PC-3 (cell line): ENCODE measurements at regions of chr12 and their contacts with region 1.

Region 1: DNA sequence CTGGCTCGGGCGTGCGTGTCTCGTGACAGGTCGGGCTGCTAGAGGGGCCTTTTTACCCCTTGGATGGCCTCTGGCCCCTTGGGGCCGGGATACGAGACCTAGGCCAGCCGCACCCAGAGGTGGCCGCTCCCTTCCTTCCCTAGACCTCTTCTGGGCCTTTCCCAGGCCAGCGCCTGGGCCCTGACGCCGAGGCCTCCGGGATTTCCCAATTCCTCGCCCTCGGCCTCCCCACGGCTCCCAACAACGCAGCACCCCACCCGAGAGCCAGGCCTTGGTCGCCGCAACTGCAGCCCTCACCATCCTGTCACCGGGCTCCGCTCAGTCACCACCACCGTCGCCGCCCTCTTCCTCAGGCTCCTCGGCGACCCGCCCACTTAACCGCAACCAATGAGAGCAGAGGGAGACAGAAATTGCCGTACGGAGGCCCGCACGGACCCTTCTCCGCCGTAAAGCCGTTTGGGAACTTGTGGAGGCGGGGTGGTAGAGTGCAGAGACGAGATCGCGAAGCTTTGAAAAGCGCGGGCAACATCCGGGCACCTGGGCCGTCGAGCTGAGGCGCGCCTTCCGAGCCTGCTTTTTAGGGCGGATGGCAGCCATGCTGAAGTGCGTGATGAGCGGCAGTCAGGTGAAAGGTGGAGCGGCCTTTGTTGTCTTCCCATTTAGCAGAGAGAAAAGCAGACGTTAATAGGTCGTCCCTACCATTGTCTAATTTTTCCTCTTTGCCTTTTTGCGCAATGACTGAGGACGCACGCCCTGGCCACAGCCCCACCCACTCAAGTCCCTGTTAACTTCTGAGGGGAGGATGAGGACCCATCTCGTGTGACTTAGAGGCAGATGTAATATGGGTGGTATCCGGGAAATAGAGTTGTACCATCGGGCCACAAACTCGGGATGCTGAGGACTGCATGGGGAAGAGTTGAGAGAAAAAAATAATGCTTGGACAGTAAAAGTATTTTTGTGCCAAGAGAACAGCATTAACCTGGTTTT is at the starts of genes RAD9B and VPS29:
- DNase-seq: peak; percentile 99
- ATAC-seq: peak; percentile 95
- H3K4me3 ChIP-seq: peak within 1 kb of the TSS; percentile 96
- H3K27ac ChIP-seq: peak within 1 kb of the TSS; percentile 62
- H3K4me1 ChIP-seq: peaks cover 22% of the 10 kb centered on the region
- H3K27me3 ChIP-seq: no peaks in the 10 kb centered on the region
- CTCF ChIP-seq: no peak
- total RNA-seq, gene RAD9B: 0.40 and 0.52 TPM in 2 replicates
- total RNA-seq, gene VPS29: 96.5 and 114 TPM in 2 replicates

Region 2: DNA sequence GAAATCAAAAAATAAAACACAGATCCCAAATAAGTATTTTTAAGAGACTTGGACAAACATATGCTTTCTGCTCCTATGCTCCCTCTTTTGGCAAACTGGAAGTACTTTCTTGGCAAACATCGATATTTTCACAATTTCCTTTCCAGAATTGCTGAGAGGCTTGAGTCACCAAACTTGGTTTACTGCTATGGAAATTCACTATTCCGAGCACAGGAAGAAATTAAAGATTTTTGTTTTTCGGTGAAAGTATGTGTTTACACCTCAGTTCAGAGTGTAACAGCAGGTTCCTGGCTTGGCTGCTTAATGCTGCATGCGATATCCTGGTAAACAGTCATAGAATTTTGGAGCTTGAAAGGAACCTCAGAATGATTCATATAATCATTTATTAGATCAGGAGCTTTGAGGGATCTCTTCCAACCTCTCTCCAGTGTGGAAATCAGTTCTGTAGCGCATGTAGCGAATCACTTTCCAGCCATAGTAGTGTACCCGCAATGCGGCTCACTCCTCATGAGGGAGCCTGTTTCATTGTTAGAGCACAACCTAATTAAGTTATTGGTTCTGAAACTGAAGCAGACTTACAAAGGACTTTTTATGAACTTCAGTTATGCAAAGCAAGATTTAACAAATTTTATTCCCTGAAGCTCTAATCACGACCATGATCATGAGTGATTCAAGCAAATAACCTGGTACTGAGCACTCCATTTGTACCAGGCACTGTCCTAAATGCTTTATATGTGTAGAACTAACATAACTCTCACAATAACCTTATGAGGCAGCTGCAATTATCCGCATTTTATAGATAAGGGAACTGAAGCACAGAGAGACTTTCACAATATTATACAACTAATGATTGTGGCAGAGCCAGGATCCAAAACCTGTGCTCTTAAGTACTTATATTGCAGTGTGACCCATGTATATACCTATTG is 277.4 kb before region 1 on chr12:
- CTCF ChIA-PET with region 1: no interaction called
- POLR2A ChIA-PET with region 1: no interaction called
- intact Hi-C with region 1: no loop called
- DNase-seq: peak; percentile 91
- ATAC-seq: peak; percentile 65
- H3K4me3 ChIP-seq: peak overlapping the region; percentile 64
- H3K27ac ChIP-seq: peak overlapping the region; percentile 91
- H3K4me1 ChIP-seq: peaks cover 27% of the 10 kb centered on the region
- H3K27me3 ChIP-seq: no peaks in the 10 kb centered on the region
- CTCF ChIP-seq: peak; percentile 80

Region 3: DNA sequence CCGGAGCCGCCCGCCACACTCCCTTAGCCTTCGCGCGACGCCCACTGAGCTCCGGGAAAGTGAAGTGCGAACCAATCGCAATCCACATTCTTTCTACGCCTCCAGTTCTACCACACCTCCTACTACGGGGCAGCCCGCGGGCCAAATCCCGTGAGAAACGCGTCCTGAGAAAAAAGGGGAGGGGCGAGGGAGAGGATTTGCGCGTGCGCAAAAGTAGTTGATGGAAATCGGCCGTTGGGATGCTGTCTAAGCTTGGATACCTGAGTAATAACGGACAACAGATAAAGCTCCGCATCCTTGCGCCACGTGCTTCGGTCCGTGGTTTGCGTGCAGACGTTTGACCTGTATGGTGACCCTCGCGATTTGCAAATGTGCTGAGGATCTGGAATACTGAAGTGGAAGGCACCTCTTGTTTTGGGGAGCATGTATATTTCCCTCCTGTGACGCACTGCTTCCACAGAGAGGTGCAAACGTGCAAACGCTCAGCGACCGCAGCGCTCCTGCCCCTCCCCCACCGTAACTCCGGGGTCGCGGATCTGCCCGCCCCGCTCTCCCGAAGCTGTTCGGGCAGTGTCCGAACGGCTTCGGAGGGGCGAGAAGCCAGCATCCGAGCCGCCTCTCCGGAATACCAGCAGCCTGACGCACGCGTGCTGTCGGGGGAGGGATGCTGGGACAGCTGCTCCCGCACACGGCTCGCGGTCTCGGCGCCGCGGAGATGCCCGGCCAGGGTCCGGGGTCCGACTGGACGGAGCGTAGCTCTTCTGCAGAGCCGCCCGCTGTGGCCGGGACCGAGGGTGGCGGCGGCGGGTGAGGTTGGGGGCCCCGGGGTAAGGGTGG is 33.6 kb before region 1 on chr12 and contains the starts of genes FAM216A and GPN3:
- CTCF ChIA-PET with region 1: interaction called, 3 read pairs
- POLR2A ChIA-PET with region 1: interaction called, 11 read pairs
- intact Hi-C with region 1: loop called (anchors 1 kb)
- DNase-seq: peak; percentile 99
- ATAC-seq: peak; percentile 84
- H3K4me3 ChIP-seq: peak within 1 kb of the TSS; percentile 84
- H3K27ac ChIP-seq: peak within 1 kb of the TSS; percentile 75
- H3K4me1 ChIP-seq: peaks cover 14% of the 10 kb centered on the region
- H3K27me3 ChIP-seq: no peaks in the 10 kb centered on the region
- CTCF ChIP-seq: no peak
- total RNA-seq, gene FAM216A: 19.5 and 27.8 TPM in 2 replicates
- total RNA-seq, gene GPN3: 31.4 and 32.5 TPM in 2 replicates

Region 4: DNA sequence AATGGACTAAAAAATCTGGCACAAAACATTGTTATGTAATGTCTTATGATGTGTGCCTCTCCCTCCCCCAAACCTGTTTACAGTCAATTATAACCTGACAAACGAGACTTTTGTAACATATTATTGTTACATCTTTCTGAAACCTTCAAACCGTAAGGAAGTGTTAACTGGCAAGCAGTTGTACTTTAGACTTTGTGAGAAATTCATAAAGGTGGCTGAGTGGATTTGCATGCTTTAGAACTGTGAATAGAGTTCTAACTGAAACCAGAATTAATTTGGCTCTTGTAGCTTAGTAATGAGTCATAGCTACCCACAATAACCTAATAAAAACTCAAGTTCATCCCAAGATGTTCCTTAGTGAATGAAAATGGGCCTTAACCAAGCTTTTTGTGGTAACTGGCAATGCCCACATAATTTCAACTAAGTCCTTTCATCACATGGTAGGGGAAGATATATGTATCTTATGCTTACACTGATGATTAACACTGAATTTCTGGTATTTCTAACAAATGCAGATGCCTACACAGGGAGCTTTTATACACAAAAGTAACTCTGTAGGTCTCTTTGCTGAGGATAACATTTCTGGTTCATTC is 29.8 kb after region 1 on chr12:
- CTCF ChIA-PET with region 1: no interaction called
- POLR2A ChIA-PET with region 1: no interaction called
- intact Hi-C with region 1: no loop called
- DNase-seq: peak; percentile 76
- ATAC-seq: peak; percentile 86
- H3K4me3 ChIP-seq: no peak overlapping the region
- H3K27ac ChIP-seq: peak overlapping the region; percentile 40
- H3K4me1 ChIP-seq: peaks cover 31% of the 10 kb centered on the region
- H3K27me3 ChIP-seq: no peaks in the 10 kb centered on the region
- CTCF ChIP-seq: no peak

Region 5: DNA sequence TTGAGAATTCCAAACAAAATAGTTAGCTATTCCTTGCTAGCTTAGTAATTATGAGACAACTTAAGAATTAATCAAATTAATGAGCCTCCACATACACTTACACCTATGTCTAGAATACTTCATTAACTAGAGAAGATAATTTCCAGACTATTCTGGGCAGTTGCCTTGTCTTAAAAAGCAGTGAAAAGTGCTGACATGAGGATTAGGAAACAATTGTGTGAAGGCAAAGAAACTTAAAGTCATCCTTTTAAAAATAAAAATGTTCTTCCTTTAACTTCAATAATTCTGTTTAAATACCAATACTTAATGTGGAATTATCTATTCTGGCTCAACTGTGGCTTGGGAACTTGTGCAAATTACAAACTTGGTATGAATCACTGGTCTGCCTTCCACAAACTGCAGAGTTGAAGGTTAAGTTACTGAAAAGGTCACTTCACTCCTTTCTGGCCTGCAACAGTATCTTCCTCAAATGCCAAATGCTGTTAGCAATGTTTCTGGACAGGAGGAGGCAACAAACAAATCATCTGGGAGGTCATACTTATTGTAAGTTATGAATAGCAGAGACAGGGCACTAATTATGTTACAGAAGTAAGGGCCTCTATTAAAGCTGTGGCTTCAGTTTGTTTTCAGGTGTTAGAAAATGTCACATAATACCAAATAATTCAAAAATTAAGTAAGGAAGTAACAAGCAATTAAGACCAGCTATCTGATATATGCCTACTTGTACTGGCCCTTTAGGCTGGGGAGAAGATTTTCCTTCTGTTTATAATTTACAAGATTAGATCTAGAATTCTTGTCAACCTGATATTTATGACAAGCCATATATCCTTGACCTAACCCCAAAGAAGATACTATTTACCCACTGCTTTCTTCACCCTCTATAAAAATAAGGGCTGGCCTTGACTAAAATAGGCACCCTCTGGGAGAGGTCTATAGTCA is 61.9 kb after region 1 on chr12:
- CTCF ChIA-PET with region 1: no interaction called
- POLR2A ChIA-PET with region 1: interaction called, 10 read pairs
- intact Hi-C with region 1: no loop called
- DNase-seq: peak; percentile 19
- ATAC-seq: no peak
- H3K4me3 ChIP-seq: no peak overlapping the region
- H3K27ac ChIP-seq: 0 out of 2 replicates have a peak overlapping the region, but pooled peaks have one; percentile 0
- H3K4me1 ChIP-seq: peaks cover 46% of the 10 kb centered on the region
- H3K27me3 ChIP-seq: no peaks in the 10 kb centered on the region
- CTCF ChIP-seq: no peak